Activated CD4-positive, alpha-beta memory T cell treated with anti-CD3 and anti-CD28 coated beads for 36 hours (primary cell): ENCODE measurements at regions of chr12 and their contacts with region 1.

Region 1: DNA sequence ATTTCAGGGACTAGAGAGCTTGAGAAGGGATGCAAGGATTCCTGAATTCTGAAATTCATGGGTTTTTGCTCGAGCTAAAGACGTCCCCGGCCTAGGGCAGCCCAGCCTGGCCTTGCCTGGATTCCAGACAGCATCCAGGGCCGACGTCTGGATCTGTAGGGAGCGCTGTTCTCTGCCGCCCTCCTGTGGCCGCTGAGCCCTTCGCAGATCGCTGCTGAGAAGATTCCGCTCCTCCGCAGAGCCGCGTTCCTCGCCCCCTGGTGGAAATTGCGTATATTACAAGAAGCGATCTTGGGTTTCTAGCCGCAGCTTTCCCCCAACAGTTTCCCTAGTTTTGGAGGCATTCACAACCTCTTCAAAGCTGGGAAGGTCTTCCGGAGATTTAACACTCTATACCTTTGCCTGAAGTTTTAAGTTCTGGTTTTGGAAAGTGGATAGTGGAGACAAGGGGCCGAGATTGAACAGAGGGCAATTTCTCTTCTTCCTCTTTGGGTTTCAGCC is 5.1 kb downstream of the CISTR start:
- DNase-seq: peak; percentile 92
- H3K4me3 Mint-ChIP-seq: no peak overlapping the region
- H3K27ac Mint-ChIP-seq: no peak overlapping the region
- H3K4me1 Mint-ChIP-seq: peaks cover 20% of the 10 kb centered on the region
- H3K27me3 Mint-ChIP-seq: peaks cover 26% of the 10 kb centered on the region

Region 2: DNA sequence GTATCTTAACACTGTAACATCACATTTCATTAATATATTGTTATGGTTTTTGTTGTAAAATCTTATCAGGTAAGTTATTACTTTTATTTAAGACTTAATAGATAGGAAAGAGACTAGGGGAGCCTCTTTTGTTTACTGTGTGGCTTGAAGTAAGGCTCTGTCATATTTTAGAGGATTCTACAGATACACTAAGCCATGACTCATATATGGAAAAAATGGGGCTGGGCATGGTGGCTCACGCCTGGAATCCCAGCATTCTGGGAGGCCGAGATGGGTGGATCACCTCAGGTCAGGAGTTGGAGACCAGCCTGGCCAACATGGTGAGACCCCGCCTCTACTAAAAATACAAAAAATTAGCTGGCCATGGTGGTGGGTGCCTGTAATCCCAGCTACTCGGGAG is 215.7 kb before region 1 on chr12:
- CTCF ChIA-PET with region 1: no interaction called
- POLR2A ChIA-PET with region 1: no interaction called
- intact Hi-C with region 1: no loop called
- DNase-seq: no peak
- H3K4me3 Mint-ChIP-seq: no peak overlapping the region
- H3K27ac Mint-ChIP-seq: no peak overlapping the region
- H3K4me1 Mint-ChIP-seq: no peaks in the 10 kb centered on the region
- H3K27me3 Mint-ChIP-seq: no peaks in the 10 kb centered on the region

Region 3: DNA sequence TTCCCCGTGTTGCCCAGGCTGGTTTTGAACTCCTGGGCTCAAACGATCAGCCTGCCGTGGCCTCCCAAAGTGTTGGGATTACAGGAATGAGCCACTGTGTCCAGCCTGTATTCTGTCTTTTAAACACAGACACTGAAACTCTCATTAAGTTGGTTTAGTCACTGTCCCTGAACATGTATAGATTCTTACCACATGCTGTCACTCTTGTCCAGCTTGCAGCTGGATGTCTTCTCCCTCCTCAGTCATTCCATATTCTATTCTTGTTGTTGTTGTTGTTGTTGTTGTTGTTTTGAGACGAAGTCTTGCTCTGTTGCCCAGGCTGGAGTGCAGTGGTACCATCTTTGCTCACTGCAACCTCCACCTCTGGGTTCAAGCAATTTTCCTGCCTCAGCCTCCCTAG is 58.5 kb before region 1 on chr12:
- CTCF ChIA-PET with region 1: interaction called, 28 read pairs
- POLR2A ChIA-PET with region 1: no interaction called
- intact Hi-C with region 1: no loop called
- DNase-seq: no peak
- H3K4me3 Mint-ChIP-seq: no peak overlapping the region
- H3K27ac Mint-ChIP-seq: no peak overlapping the region
- H3K4me1 Mint-ChIP-seq: no peaks in the 10 kb centered on the region
- H3K27me3 Mint-ChIP-seq: peaks cover 15% of the 10 kb centered on the region

Region 4: DNA sequence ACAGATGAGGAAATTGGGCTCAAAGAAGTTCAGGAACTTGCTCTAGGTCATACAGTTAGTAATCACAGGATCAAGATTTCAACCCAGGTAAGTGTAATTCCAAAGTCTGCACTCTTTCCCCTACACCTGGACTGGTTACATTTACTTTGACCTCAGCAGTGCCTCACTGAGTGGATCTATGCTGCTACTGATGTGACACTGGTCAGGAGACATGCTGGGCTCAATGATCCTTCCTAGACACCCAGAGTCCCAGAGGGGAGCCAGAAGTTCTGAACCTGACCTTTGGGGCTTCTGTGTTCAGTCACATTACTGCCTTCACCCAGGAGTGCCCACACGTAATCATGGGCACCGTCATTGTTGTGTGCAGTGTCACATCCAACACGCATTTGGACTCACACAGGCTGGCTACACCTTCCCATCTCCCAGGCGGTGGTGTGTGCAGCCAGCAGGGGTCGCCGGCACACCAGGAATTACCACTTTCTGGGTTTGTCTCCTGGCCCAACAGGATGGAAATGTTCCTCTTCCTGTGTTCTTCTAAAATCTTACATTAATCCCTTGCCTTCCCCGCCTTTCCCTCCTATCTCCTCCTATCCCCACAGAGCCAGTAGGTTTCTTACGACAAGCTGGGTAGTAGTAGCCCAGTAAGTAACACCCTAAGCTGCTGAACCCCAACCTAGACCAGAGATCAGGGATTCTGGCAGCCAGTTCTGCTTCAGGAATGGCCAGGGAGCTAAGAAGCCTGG is 45.0 kb before region 1 on chr12:
- CTCF ChIA-PET with region 1: interaction called, 301 read pairs
- POLR2A ChIA-PET with region 1: no interaction called
- intact Hi-C with region 1: loop called (anchors 1 kb)
- DNase-seq: peak; percentile 84
- H3K4me3 Mint-ChIP-seq: no peak overlapping the region
- H3K27ac Mint-ChIP-seq: no peak overlapping the region
- H3K4me1 Mint-ChIP-seq: peaks cover 5% of the 10 kb centered on the region
- H3K27me3 Mint-ChIP-seq: peaks cover 62% of the 10 kb centered on the region

Region 5: GRCh38 chr12:53727310-53728041 is 19.2 kb before region 1 on chr12 and contains the start of gene CALCOCO1:
- CTCF ChIA-PET with region 1: interaction called, 269 read pairs
- POLR2A ChIA-PET with region 1: interaction called, 3 read pairs
- intact Hi-C with region 1: no loop called
- DNase-seq: peak; percentile 99
- H3K4me3 Mint-ChIP-seq: peak within 1 kb of the TSS; percentile 87
- H3K27ac Mint-ChIP-seq: peak within 1 kb of the TSS; percentile 77
- H3K4me1 Mint-ChIP-seq: peaks cover 19% of the 10 kb centered on the region
- H3K27me3 Mint-ChIP-seq: no peaks in the 10 kb centered on the region
- total RNA-seq, gene CALCOCO1: 21.2 to 23.7 TPM

Region 6: GRCh38 chr12:53845916-53846315 is 99.3 kb after region 1 on chr12:
- CTCF ChIA-PET with region 1: no interaction called
- POLR2A ChIA-PET with region 1: no interaction called
- intact Hi-C with region 1: no loop called
- DNase-seq: no peak
- H3K4me3 Mint-ChIP-seq: no peak overlapping the region
- H3K27ac Mint-ChIP-seq: no peak overlapping the region
- H3K4me1 Mint-ChIP-seq: no peaks in the 10 kb centered on the region
- H3K27me3 Mint-ChIP-seq: peaks cover 46% of the 10 kb centered on the region